Activated CD8-positive, alpha-beta memory T cell treated with anti-CD3 and anti-CD28 coated beads, Interleukin-2, amount 10 ng/mL, durations not matched to agents 7 days and 5 days (primary cell): ENCODE measurements at regions of chr3 and their contacts with region 1.

Region 1: GRCh38 chr3:129249276-129250065 is at the start of gene COPG1:
- DNase-seq: peak; percentile 91
- ATAC-seq: peak; percentile 91
- H3K4me3 Mint-ChIP-seq: peak within 1 kb of the TSS; percentile 94
- H3K27ac Mint-ChIP-seq: peak within 1 kb of the TSS; percentile 94
- H3K4me1 Mint-ChIP-seq: peaks cover 48% of the 10 kb centered on the region
- H3K27me3 Mint-ChIP-seq: no peaks in the 10 kb centered on the region
- total RNA-seq, gene COPG1: 130 to 141 TPM

Region 2: DNA sequence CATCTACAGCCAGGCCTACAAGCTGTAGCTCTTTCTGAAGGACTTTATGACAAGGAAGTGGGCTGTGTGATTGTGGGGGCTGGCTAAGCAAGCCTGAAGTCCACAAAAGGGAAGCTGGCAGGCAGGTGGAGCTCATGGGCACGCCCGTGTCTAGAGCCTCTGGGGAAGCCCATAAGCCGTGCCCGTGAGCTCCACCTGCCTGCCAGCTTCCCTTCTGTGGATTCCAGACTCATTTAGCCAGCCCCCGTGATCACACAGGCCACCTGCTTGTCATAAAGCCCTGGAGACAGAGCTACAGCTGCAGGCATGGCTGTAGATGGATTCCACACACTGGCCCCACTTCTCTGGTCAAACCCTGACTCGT is 233.1 kb before region 1 on chr3:
- CTCF ChIA-PET with region 1: interaction called, 14 read pairs
- DNase-seq: peak; percentile 86
- ATAC-seq: peak; percentile 84
- H3K4me3 Mint-ChIP-seq: peak overlapping the region; percentile 66
- H3K27ac Mint-ChIP-seq: peak overlapping the region; percentile 95
- H3K4me1 Mint-ChIP-seq: peaks cover 38% of the 10 kb centered on the region
- H3K27me3 Mint-ChIP-seq: no peaks in the 10 kb centered on the region

Region 3: GRCh38 chr3:129120254-129121004 is 129.0 kb before region 1 on chr3:
- CTCF ChIA-PET with region 1: interaction called, 39 read pairs
- DNase-seq: peak; percentile 98
- ATAC-seq: peak; percentile 69
- H3K4me3 Mint-ChIP-seq: peak overlapping the region; percentile 88
- H3K27ac Mint-ChIP-seq: peak overlapping the region; percentile 97
- H3K4me1 Mint-ChIP-seq: peaks cover 61% of the 10 kb centered on the region
- H3K27me3 Mint-ChIP-seq: no peaks in the 10 kb centered on the region

Region 4: DNA sequence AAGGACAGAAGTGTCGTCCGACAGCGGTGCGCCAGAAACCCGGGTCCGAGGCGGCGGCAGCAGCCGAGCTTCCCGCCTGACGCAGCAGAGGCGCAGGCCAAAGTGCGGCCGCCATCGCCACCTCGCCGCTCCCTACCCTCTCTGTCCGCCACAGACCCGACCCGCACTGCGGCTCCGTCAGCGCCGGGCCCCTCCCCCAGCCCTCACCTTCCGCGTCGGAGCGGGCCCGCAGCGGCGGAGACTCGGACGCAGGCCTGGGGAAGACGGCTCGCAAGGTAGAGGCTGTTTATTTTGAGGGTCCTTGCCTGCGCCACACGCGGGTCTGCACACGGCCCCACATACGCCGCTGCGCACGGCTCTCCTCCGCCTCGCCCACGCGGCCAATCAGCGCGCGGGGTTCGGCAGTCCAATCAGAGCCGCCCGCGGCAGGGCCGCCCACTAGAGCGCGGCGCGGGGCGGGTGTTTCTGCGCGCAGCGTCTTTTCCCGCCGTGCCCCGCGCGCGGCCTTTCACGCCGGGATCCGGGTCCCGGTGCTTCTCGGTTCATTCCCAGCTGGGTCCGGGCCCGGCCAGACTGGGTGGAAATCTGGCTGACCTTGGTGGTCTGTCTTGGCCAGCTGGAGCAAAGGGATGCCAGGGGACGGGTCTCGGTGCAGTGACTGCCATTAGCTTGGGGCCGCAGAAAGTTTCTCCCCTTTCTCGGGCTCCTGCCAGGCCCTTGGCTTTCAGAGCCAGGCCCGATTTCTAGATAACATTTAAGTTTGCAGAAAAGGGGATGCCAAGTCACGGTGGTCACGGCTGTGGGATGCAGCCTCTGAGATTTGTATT is 65.7 kb before region 1 on chr3 and contains the start of gene CNBP:
- CTCF ChIA-PET with region 1: interaction called, 58 read pairs
- DNase-seq: peak; percentile 94
- ATAC-seq: peak; percentile 98
- H3K4me3 Mint-ChIP-seq: peak within 1 kb of the TSS; percentile 87
- H3K27ac Mint-ChIP-seq: peak within 1 kb of the TSS; percentile 95
- H3K4me1 Mint-ChIP-seq: peaks cover 42% of the 10 kb centered on the region
- H3K27me3 Mint-ChIP-seq: no peaks in the 10 kb centered on the region
- total RNA-seq, gene CNBP: 270 to 330 TPM

Region 5: GRCh38 chr3:129233538-129233937 is 15.9 kb before region 1 on chr3:
- CTCF ChIA-PET with region 1: interaction called, 33 read pairs
- DNase-seq: no peak
- ATAC-seq: no peak
- H3K4me3 Mint-ChIP-seq: peak overlapping the region; percentile 5
- H3K27ac Mint-ChIP-seq: peak overlapping the region; percentile 62
- H3K4me1 Mint-ChIP-seq: peaks cover 63% of the 10 kb centered on the region
- H3K27me3 Mint-ChIP-seq: no peaks in the 10 kb centered on the region